BJ (cell line): ENCODE measurements at regions of chr2 and their contacts with region 1.

Region 1: GRCh38 chr2:9799665-9800632 is 43.3 kb upstream of the TAF1B start:
- DNase-seq: no peak
- H3K4me3 ChIP-seq: no peak overlapping the region
- H3K27me3 ChIP-seq: peaks cover 1% of the 10 kb centered on the region; the same call in 1 of the 2 replicates
- CTCF ChIP-seq: peak; percentile 99

Region 2: DNA sequence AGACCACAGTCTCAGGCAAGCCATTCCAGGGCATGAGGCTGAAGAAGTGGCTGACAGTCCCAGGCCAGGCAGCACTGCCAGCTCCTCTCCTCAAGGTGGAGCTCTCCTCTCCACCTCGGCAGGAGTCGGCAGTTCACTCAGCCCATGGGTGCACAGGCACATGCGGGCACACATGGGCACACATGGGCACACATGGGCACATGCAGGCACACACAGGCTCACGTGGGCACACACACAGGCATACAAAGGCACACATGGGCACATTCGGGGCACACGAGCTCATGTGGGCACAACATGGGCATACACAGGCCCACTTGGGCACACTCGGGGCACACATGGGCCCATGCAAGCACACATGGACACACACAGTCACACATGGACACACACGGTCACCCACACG is 21.9 kb before region 1 on chr2:
- CTCF ChIA-PET with region 1: interaction called, 11 read pairs
- POLR2A ChIA-PET with region 1: no interaction called
- DNase-seq: no peak
- H3K4me3 ChIP-seq: no peak overlapping the region
- H3K27me3 ChIP-seq: peaks cover 2% of the 10 kb centered on the region
- CTCF ChIP-seq: peak; percentile 46

Region 3: GRCh38 chr2:9789371-9789968 is 10.5 kb before region 1 on chr2:
- CTCF ChIA-PET with region 1: interaction called, 17 read pairs
- POLR2A ChIA-PET with region 1: no interaction called
- DNase-seq: no peak
- H3K4me3 ChIP-seq: no peak overlapping the region
- H3K27me3 ChIP-seq: no peaks in the 10 kb centered on the region
- CTCF ChIP-seq: no peak

Region 4: GRCh38 chr2:9984217-9984739 is 184.3 kb after region 1 on chr2:
- CTCF ChIA-PET with region 1: interaction called, 16 read pairs
- POLR2A ChIA-PET with region 1: no interaction called
- DNase-seq: no peak
- H3K4me3 ChIP-seq: no peak overlapping the region
- H3K27me3 ChIP-seq: no peaks in the 10 kb centered on the region
- CTCF ChIP-seq: peak; percentile 64

Region 5: DNA sequence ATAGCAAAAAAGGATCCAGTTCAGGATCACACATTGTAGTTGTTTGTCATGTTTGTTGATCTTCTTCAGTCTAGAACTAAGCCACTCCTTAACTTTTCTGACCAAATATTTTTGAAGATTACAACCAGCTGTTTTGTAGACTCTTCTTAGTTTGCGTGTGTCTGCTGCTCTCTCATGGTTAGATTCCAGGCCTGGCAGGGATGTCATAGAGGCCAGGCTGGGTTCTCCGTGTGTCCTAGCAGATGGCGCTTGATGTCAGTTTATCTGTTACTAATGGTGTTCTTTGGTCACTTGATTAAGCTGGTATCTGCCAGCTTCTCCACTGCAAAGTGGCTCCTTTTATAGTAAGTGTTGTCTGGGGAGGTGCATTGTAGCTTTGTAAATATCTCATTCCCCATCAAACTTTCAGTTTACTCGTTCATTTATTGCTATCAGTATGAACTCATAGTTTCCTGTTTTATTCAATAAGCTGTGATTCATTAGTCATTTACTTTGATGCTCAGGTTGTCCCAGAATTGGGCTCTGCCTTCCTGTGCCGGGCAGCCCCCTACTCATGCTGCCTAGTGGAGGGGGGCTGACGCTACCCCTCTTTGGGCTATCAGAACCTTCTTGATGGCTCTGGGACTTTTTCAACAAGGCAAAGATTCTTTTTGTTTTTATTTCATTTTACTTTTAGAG is 193.7 kb after region 1 on chr2:
- CTCF ChIA-PET with region 1: interaction called, 17 read pairs
- POLR2A ChIA-PET with region 1: no interaction called
- DNase-seq: peak; percentile 59
- H3K4me3 ChIP-seq: no peak overlapping the region
- H3K27me3 ChIP-seq: no peaks in the 10 kb centered on the region
- CTCF ChIP-seq: peak; percentile 55

Region 6: GRCh38 chr2:10043906-10044601 is 244.1 kb after region 1 on chr2:
- CTCF ChIA-PET with region 1: interaction called, 91 read pairs
- POLR2A ChIA-PET with region 1: no interaction called
- DNase-seq: peak; percentile 63
- H3K4me3 ChIP-seq: peak overlapping the region; percentile 79
- H3K27me3 ChIP-seq: no peaks in the 10 kb centered on the region
- CTCF ChIP-seq: no peak